BJ (cell line): ENCODE measurements at regions of chr16 and their contacts with region 1.

Region 1: GRCh38 chr16:88811769-88812512 is at the start of gene APRT:
- DNase-seq: peak; percentile 79
- H3K4me3 ChIP-seq: peak within 1 kb of the TSS; percentile 86
- H3K27me3 ChIP-seq: no peaks in the 10 kb centered on the region
- CTCF ChIP-seq: no peak
- polyA plus RNA-seq, gene APRT: 102 and 152 TPM in 2 replicates

Region 2: GRCh38 chr16:88846088-88846487 is 34.1 kb after region 1 on chr16:
- CTCF ChIA-PET with region 1: no interaction called
- POLR2A ChIA-PET with region 1: interaction called, 12 read pairs
- DNase-seq: no peak
- H3K4me3 ChIP-seq: no peak overlapping the region
- H3K27me3 ChIP-seq: no peaks in the 10 kb centered on the region
- CTCF ChIP-seq: no peak